ENCODE measurements at regions of chr12 and their contacts with region 1.

Region 1: DNA sequence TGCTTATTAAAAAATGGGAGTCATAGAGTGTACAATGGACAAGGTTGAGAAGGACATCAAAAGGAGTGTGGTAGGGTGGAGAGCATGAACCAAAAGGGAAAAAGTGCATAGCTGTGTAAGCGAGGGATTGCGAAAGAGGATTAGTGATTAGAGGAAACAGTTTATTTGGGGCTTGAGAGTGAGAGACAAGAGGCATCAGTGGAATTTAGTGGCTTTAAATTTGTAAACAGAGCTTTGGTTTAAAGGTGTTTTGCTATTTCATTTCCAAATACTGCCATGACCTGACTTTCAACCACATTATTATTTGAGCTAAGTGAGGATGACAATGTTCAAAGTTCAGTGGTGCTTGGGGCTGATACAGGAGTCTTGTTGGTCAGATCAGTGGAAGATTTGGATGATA is 53.4 kb downstream of the SLC16A7 start:
- DNase-seq: peak; percentile 63
- ATAC-seq: no peak
- H3K4me3 ChIP-seq: no peak overlapping the region
- H3K27ac ChIP-seq: no peak overlapping the region
- H3K4me1 ChIP-seq: peaks cover 17% of the 10 kb centered on the region
- H3K27me3 ChIP-seq: no peaks in the 10 kb centered on the region
- CTCF ChIP-seq: no peak
- EP300 ChIP-seq: no peak; a peak in 1 of 4 replicates
- POLR2A ChIP-seq: no peak
- RAD21 ChIP-seq: no peak

Region 2: GRCh38 chr12:59499774-59500173 is 149.4 kb before region 1 on chr12:
- CTCF ChIA-PET with region 1: no interaction called
- POLR2A ChIA-PET with region 1: no interaction called
- in situ Hi-C with region 1: no loop called
- intact Hi-C with region 1: no loop called
- DNase-seq: no peak
- ATAC-seq: no peak
- H3K4me3 ChIP-seq: no peak overlapping the region
- H3K27ac ChIP-seq: no peak overlapping the region
- H3K4me1 ChIP-seq: no peaks in the 10 kb centered on the region
- H3K27me3 ChIP-seq: no peaks in the 10 kb centered on the region
- CTCF ChIP-seq: no peak
- EP300 ChIP-seq: no peak
- POLR2A ChIP-seq: no peak
- RAD21 ChIP-seq: no peak

Region 3: DNA sequence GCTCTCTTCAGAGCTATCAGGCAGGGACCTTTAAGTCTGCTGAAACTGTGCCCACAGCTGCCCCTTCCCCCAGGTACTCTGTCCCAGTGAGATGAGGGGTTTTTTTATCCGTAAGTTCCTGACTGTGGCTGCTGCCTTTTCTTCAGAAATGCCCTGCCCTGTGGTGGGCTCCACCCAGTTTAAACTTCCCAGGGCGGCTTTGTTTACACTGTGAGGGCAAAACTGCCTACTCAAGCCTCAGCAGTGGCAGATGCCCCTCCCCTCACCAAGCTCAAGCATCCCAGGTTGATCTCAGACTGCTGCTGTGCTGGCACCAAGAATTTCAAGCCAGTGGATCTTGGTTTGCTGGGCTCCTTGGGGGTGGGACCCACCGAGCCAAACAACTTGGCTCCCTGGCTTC is 100.3 kb before region 1 on chr12:
- CTCF ChIA-PET with region 1: no interaction called
- POLR2A ChIA-PET with region 1: no interaction called
- in situ Hi-C with region 1: no loop called
- intact Hi-C with region 1: no loop called
- DNase-seq: no peak
- ATAC-seq: no peak
- H3K4me3 ChIP-seq: no peak overlapping the region
- H3K27ac ChIP-seq: no peak overlapping the region
- H3K4me1 ChIP-seq: no peaks in the 10 kb centered on the region
- H3K27me3 ChIP-seq: no peaks in the 10 kb centered on the region
- CTCF ChIP-seq: no peak
- EP300 ChIP-seq: no peak
- POLR2A ChIP-seq: no peak
- RAD21 ChIP-seq: no peak

Region 4: GRCh38 chr12:59619461-59620240 is 29.6 kb before region 1 on chr12:
- CTCF ChIA-PET with region 1: no interaction called
- POLR2A ChIA-PET with region 1: no interaction called
- in situ Hi-C with region 1: no loop called
- intact Hi-C with region 1: loop called (anchors 2 kb)
- DNase-seq: no peak
- ATAC-seq: no peak
- H3K4me3 ChIP-seq: no peak overlapping the region
- H3K27ac ChIP-seq: no peak overlapping the region
- H3K4me1 ChIP-seq: no peaks in the 10 kb centered on the region
- H3K27me3 ChIP-seq: no peaks in the 10 kb centered on the region
- CTCF ChIP-seq: no peak
- EP300 ChIP-seq: no peak
- POLR2A ChIP-seq: no peak
- RAD21 ChIP-seq: no peak

Region 5: GRCh38 chr12:59677857-59678256 is 28.7 kb after region 1 on chr12:
- CTCF ChIA-PET with region 1: no interaction called
- POLR2A ChIA-PET with region 1: no interaction called
- in situ Hi-C with region 1: no loop called
- intact Hi-C with region 1: no loop called
- DNase-seq: no peak
- ATAC-seq: no peak
- H3K4me3 ChIP-seq: no peak overlapping the region
- H3K27ac ChIP-seq: no peak overlapping the region
- H3K4me1 ChIP-seq: no peaks in the 10 kb centered on the region
- H3K27me3 ChIP-seq: no peaks in the 10 kb centered on the region
- CTCF ChIP-seq: no peak
- EP300 ChIP-seq: no peak
- POLR2A ChIP-seq: no peak
- RAD21 ChIP-seq: no peak